ENCODE measurements at regions of chrX and their contacts with region 1.

Region 1: GRCh38 chrX:153871451-153871850 is 14.5 kb downstream of the L1CAM start:
- DNase-seq: no peak
- H3K4me3 ChIP-seq: no peak overlapping the region
- H3K27ac ChIP-seq: no peak overlapping the region
- H3K4me1 ChIP-seq: no peaks in the 10 kb centered on the region
- H3K27me3 ChIP-seq: no peaks in the 10 kb centered on the region
- CTCF ChIP-seq: no peak

Region 2: GRCh38 chrX:153845842-153846241 is 25.6 kb before region 1 on chrX:
- CTCF ChIA-PET with region 1: no interaction called
- POLR2A ChIA-PET with region 1: interaction called, 11 read pairs
- intact Hi-C with region 1: no loop called
- DNase-seq: no peak
- H3K4me3 ChIP-seq: no peak overlapping the region
- H3K27ac ChIP-seq: no peak overlapping the region
- H3K4me1 ChIP-seq: no peaks in the 10 kb centered on the region
- H3K27me3 ChIP-seq: peaks cover 60% of the 10 kb centered on the region
- CTCF ChIP-seq: no peak

Measured in PC-9 (cell line).